ENCODE measurements at regions of chr4 and their contacts with region 1.

Region 1: DNA sequence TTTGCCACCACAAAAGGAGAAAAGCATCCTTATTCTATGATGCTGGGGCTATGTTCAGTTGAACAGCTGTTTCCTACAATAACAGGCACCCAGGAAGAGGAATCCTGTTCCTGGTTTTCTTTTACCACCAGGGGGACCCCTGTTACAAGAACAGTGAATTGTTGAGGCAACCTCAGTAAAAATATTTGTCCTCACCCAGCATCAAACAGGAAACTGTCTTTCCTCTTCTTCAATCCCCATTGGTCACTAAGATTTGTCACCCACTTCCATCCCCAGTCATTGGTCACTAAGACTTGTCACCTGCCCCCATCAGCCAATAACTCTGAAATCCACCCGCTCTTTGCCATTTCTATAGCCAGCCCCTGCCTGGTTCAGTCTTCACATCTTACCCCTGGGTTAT is 143.5 kb upstream of the GALNT7 start:
- H3K4me3 Mint-ChIP-seq: no peak overlapping the region
- H3K27ac Mint-ChIP-seq: no peak overlapping the region
- H3K4me1 Mint-ChIP-seq: peaks cover 6% of the 10 kb centered on the region
- H3K27me3 Mint-ChIP-seq: no peaks in the 10 kb centered on the region

Region 2: GRCh38 chr4:173168396-173169177 is 143.5 kb after region 1 on chr4 and contains the start of gene GALNT7:
- intact Hi-C with region 1: loop called (anchors 5 kb)
- H3K4me3 Mint-ChIP-seq: peak within 1 kb of the TSS; percentile 90
- H3K27ac Mint-ChIP-seq: peak within 1 kb of the TSS; percentile 87
- H3K4me1 Mint-ChIP-seq: peaks cover 46% of the 10 kb centered on the region
- H3K27me3 Mint-ChIP-seq: no peaks in the 10 kb centered on the region

Region 3: DNA sequence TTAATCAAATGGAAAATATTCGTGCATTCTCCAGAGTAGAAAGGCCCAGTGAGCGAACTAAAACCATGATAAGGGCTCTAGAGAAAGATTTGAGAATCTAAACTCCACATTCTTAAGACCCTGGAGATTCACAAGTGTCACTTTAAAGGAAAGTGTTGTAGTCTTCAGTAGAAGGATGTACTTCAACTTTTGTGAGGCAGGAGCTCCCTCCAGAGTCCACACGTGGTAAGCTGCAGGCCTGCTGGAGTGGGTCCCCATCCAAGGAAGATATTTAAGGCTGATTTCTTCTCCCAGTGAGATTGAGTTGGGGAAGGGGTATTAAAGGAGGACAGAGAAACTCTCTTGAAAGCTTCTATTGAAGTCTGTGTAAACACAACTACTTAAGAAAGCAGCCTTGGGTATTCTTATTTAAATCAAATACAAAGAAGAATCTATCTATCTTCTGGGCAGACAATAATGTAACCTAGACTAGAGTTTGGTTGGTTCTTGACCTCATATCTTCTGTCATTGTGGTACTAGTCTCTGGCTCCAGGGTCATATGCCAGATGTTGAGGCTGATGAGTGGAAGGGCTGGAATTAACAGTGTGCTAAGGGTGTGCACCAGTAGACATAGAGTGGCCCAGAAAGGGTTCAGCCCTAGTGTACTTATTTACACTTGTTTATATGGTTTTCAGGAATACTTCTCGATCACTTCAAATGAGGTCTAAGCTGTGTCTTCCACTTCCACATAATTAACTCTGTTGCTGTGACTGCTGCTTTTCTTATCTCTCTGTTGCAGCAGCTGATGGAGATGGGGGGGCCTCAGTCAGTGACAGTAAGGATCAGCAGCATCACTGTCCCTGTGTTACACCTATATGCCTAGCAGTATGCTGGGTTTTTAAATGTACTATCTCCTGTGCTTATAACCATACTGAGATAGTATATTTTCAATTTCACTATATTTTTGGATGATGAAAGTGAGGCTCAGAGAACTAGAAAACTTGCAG is 232.9 kb after region 1 on chr4:
- intact Hi-C with region 1: loop called (anchors 1 kb)
- H3K4me3 Mint-ChIP-seq: no peak overlapping the region
- H3K27ac Mint-ChIP-seq: no peak overlapping the region
- H3K4me1 Mint-ChIP-seq: peaks cover 10% of the 10 kb centered on the region
- H3K27me3 Mint-ChIP-seq: no peaks in the 10 kb centered on the region

Region 4: DNA sequence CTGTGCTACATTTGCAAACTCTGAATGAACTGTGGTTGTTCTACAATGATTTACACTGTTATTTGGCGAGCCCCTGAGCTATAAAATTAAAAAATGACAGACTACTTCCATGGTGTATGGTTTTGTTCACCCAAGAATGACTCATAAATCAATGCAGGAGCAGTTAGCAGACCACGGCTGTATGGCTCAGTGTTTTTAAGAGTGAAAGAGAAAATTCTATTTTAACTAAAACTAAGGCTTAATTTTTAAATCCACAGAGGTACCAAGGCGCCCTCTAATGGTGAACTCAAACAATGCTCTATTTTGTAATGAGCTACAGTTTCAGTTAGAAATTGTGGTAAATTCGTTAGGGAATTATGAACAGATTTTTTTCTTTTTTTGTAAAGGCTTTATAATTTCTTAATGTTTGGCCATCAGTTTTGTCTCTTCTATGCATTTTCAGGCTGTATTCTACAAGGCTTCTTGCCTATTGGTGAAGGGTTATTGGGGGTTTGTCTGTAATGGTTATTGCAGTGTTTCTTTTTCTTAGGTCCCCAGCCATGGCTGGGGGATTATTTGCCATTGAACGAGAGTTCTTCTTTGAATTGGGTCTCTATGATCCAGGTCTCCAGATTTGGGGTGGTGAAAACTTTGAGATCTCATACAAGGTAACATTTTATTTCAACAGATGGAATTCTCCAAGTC is 276.5 kb after region 1 on chr4:
- intact Hi-C with region 1: loop called (anchors 2 kb)
- H3K4me3 Mint-ChIP-seq: no peak overlapping the region
- H3K27ac Mint-ChIP-seq: no peak overlapping the region
- H3K4me1 Mint-ChIP-seq: no peaks in the 10 kb centered on the region
- H3K27me3 Mint-ChIP-seq: no peaks in the 10 kb centered on the region